Motor neuron (in vitro differentiated cells): ENCODE measurements at regions of chr6 and their contacts with region 1.

Region 1: GRCh38 chr6:155174576-155175211 is 89.1 kb upstream of the CLDN20 start:
- ATAC-seq: peak; percentile 48 to 91 (median 87)
- H3K4me3 ChIP-seq: no peak overlapping the region
- H3K27ac ChIP-seq: no peak overlapping the region
- H3K4me1 ChIP-seq: peaks cover 17 to 20% of the 10 kb centered on the region in 2 donors

Region 2: GRCh38 chr6:154928325-154928922 is 246.3 kb before region 1 on chr6:
- in situ Hi-C with region 1: loop called in 6 of 9 experiments (anchors 10 to 25 kb)
- ATAC-seq: peak; percentile 63 to 83 (median 74)
- H3K4me3 ChIP-seq: no peak overlapping the region
- H3K27ac ChIP-seq: no peak overlapping the region
- H3K4me1 ChIP-seq: peaks cover 0 to 3% of the 10 kb centered on the region in 2 donors

Region 3: GRCh38 chr6:155248008-155249001 is 73.6 kb after region 1 on chr6:
- in situ Hi-C with region 1: loop called in 1 of 9 experiments (anchors 10 kb)
- ATAC-seq: peak; percentile 41 to 76 (median 56)
- H3K4me3 ChIP-seq: no peak overlapping the region
- H3K27ac ChIP-seq: no peak overlapping the region
- H3K4me1 ChIP-seq: no peaks in the 10 kb centered on the region

Region 4: DNA sequence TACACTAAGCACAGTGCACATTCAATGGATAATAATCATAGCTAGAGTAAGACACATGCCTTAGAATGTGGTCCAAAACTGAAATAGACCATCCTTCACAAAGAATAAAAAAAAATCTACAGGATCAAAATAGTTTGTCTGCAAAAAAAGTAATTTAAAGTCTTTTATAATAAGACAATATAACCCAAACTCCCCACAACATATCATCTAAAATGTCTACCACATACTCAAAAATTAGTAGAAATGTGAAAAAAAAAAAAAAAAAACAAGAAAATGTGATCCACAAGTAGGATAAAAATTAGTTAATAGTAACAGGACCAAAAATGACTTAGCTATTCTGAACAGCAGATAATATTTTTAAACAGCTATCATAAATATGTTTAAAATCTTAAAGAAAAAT is 1045.3 kb after region 1 on chr6:
- in situ Hi-C with region 1: no loop called
- ATAC-seq: no peak
- H3K4me3 ChIP-seq: no peak overlapping the region
- H3K27ac ChIP-seq: no peak overlapping the region
- H3K4me1 ChIP-seq: no peaks in the 10 kb centered on the region